B cell (primary cell): ENCODE measurements at regions of chr5 and their contacts with region 1.

Region 1: DNA sequence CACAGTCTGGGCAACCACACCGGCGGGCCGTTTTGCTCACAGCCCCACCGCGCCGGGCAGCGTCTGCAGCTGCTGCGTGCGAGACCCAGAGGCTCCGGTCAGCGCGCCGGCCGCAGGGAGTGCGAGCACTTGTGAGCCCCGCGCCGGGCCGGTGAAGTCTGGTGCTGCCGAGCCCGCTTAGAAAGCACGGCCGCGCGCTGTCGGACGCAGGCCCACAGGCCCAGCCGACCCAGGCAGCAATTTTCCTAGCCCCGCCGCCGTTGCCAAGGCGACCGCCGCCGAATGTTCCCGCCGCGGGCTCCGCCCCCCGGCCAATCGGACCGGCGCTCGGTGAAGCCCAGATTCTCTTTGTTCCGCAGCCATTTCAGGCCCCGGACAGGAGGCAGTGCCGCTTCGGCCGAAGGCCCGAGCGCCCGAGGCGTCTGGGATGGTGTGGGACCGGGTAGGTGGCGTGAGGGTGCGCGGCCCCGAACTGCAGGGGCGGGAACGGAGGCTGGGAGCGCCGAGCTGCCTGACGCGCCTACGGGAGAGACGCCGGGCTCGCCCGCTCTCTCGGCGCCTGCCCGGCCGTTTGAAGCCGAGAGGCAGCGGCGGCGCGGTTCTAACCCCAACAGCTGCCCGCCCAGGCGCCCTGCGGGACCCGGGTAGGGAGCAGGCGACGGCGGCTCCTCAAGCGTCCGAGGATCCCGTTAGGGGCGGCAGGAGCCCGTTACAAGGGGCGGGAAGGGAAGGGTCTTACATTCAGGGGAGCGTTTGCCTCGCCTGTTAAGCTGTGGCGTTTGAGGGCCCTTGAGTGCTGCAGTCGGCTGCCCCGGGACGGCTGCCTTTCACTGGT is at the start of gene TNPO1:
- DNase-seq: peak; percentile 94
- ATAC-seq: peak; percentile 79
- H3K4me3 ChIP-seq: peak within 1 kb of the TSS; percentile 81 to 89 (median 82)
- H3K4me3 Mint-ChIP-seq: peak within 1 kb of the TSS; percentile 92
- H3K27ac ChIP-seq: peak within 1 kb of the TSS; percentile 91 to 99
- H3K27ac Mint-ChIP-seq: peak within 1 kb of the TSS; percentile 94
- H3K4me1 ChIP-seq: peaks cover 17 to 20% of the 10 kb centered on the region in 2 donors
- H3K4me1 Mint-ChIP-seq: peaks cover 23% of the 10 kb centered on the region
- H3K27me3 ChIP-seq: peaks cover 0 to 7% (median 0%) of the 10 kb centered on the region in 4 experiments
- H3K27me3 Mint-ChIP-seq: peaks cover 14% of the 10 kb centered on the region
- CTCF ChIP-seq: no peak
- total RNA-seq, gene TNPO1: 102 and 107 TPM in 2 replicates

Region 2: GRCh38 chr5:71455427-71456361 is 1360.8 kb before region 1 on chr5 and contains the start of gene BDP1:
- CTCF ChIA-PET with region 1: no interaction called
- POLR2A ChIA-PET with region 1: no interaction called
- intact Hi-C with region 1: loop called (anchors 5 kb)
- DNase-seq: peak; percentile 97
- ATAC-seq: peak; percentile 86
- H3K4me3 ChIP-seq: peak within 1 kb of the TSS; percentile 71 to 99 (median 90)
- H3K4me3 Mint-ChIP-seq: peak within 1 kb of the TSS; percentile 94
- H3K27ac ChIP-seq: peak within 1 kb of the TSS; percentile 87 to 92
- H3K27ac Mint-ChIP-seq: peak within 1 kb of the TSS; percentile 97
- H3K4me1 ChIP-seq: peaks cover 17% of the 10 kb centered on the region in 2 donors
- H3K4me1 Mint-ChIP-seq: peaks cover 24% of the 10 kb centered on the region
- H3K27me3 ChIP-seq: peaks cover 0 to 7% (median 5%) of the 10 kb centered on the region in 4 experiments
- H3K27me3 Mint-ChIP-seq: peaks cover 7% of the 10 kb centered on the region
- CTCF ChIP-seq: peak; percentile 68
- total RNA-seq, gene BDP1: 59.4 and 63.9 TPM in 2 replicates

Region 3: GRCh38 chr5:72319976-72320752 is 496.4 kb before region 1 on chr5 and contains the starts of genes MRPS27 and PTCD2:
- CTCF ChIA-PET with region 1: interaction called, 3 read pairs
- POLR2A ChIA-PET with region 1: no interaction called
- intact Hi-C with region 1: loop called (anchors 1 kb)
- DNase-seq: peak; percentile 97
- ATAC-seq: peak; percentile 99
- H3K4me3 ChIP-seq: peak within 1 kb of the TSS; percentile 61 to 98 (median 81)
- H3K4me3 Mint-ChIP-seq: peak within 1 kb of the TSS; percentile 91
- H3K27ac ChIP-seq: peak within 1 kb of the TSS; percentile 47 to 60
- H3K27ac Mint-ChIP-seq: peak within 1 kb of the TSS; percentile 95
- H3K4me1 ChIP-seq: peaks cover 8 to 13% of the 10 kb centered on the region in 2 donors
- H3K4me1 Mint-ChIP-seq: peaks cover 29% of the 10 kb centered on the region
- H3K27me3 ChIP-seq: no peaks in the 10 kb centered on the region
- H3K27me3 Mint-ChIP-seq: no peaks in the 10 kb centered on the region
- CTCF ChIP-seq: no peak
- total RNA-seq, gene MRPS27: 52.8 and 58.3 TPM in 2 replicates
- total RNA-seq, gene PTCD2: 10.1 and 10.5 TPM in 2 replicates

Region 4: GRCh38 chr5:72597456-72597948 is 219.0 kb before region 1 on chr5:
- CTCF ChIA-PET with region 1: interaction called, 6 read pairs
- POLR2A ChIA-PET with region 1: no interaction called
- intact Hi-C with region 1: loop called (anchors 5 kb)
- DNase-seq: no peak
- ATAC-seq: no peak
- H3K4me3 ChIP-seq: no peak overlapping the region
- H3K4me3 Mint-ChIP-seq: no peak overlapping the region
- H3K27ac ChIP-seq: peak overlapping the region in 1 of 2 donors; percentile 92
- H3K27ac Mint-ChIP-seq: no peak overlapping the region
- H3K4me1 ChIP-seq: peaks cover 15 to 18% of the 10 kb centered on the region in 2 donors
- H3K4me1 Mint-ChIP-seq: peaks cover 18% of the 10 kb centered on the region
- H3K27me3 ChIP-seq: no peaks in the 10 kb centered on the region
- H3K27me3 Mint-ChIP-seq: peaks cover 3% of the 10 kb centered on the region
- CTCF ChIP-seq: no peak

Region 5: GRCh38 chr5:72837524-72838096 is 21.1 kb after region 1 on chr5:
- CTCF ChIA-PET with region 1: interaction called, 10 read pairs
- POLR2A ChIA-PET with region 1: interaction called, 3 read pairs
- intact Hi-C with region 1: no loop called
- DNase-seq: no peak
- ATAC-seq: no peak
- H3K4me3 ChIP-seq: no peak overlapping the region
- H3K4me3 Mint-ChIP-seq: no peak overlapping the region
- H3K27ac ChIP-seq: no peak overlapping the region
- H3K27ac Mint-ChIP-seq: no peak overlapping the region
- H3K4me1 ChIP-seq: no peaks in the 10 kb centered on the region
- H3K4me1 Mint-ChIP-seq: peaks cover 8% of the 10 kb centered on the region
- H3K27me3 ChIP-seq: no peaks in the 10 kb centered on the region
- H3K27me3 Mint-ChIP-seq: no peaks in the 10 kb centered on the region
- CTCF ChIP-seq: no peak

Region 6: DNA sequence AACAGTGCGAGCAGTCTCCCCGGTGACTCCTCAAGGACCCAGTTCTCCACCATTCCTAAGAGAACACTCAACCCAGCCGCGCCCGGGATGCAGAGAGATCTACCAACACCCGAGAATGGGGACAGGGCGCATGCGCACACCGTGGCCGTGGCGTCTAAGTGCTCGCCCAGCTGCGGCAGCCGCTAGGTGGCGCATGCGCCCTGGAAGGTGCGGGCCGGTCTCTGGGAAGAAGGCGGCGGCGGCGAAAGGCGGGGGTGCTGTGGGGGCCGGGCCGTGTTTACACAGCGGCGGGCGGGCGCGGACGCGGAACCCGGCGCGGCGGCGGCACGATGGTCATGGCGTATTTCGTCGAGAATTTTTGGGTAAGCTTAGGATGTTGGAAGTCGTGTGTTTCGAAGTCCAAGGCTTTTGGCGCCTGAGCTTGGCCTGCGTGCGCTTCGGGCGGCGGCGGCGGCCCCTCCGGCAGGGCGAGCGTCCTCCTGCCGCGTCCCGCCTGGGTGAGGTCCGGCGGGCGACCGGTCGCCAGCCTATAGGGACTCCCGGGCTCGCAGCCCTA is 139.3 kb after region 1 on chr5 and contains the start of gene FCHO2:
- CTCF ChIA-PET with region 1: no interaction called
- POLR2A ChIA-PET with region 1: no interaction called
- intact Hi-C with region 1: loop called (anchors 1 kb)
- DNase-seq: peak; percentile 96
- ATAC-seq: peak; percentile 96
- H3K4me3 ChIP-seq: peak within 1 kb of the TSS; percentile 71 to 89 (median 77)
- H3K4me3 Mint-ChIP-seq: peak within 1 kb of the TSS; percentile 98
- H3K27ac ChIP-seq: peak within 1 kb of the TSS in 1 of 2 donors; percentile 68
- H3K27ac Mint-ChIP-seq: peak within 1 kb of the TSS; percentile 94
- H3K4me1 ChIP-seq: peaks cover 11% of the 10 kb centered on the region in 2 donors
- H3K4me1 Mint-ChIP-seq: peaks cover 19% of the 10 kb centered on the region
- H3K27me3 ChIP-seq: peaks cover 0 to 28% (median 8%) of the 10 kb centered on the region in 4 experiments
- H3K27me3 Mint-ChIP-seq: peaks cover 46% of the 10 kb centered on the region
- CTCF ChIP-seq: peak; percentile 76
- total RNA-seq, gene FCHO2: 6.5 and 11.0 TPM in 2 replicates

Region 7: DNA sequence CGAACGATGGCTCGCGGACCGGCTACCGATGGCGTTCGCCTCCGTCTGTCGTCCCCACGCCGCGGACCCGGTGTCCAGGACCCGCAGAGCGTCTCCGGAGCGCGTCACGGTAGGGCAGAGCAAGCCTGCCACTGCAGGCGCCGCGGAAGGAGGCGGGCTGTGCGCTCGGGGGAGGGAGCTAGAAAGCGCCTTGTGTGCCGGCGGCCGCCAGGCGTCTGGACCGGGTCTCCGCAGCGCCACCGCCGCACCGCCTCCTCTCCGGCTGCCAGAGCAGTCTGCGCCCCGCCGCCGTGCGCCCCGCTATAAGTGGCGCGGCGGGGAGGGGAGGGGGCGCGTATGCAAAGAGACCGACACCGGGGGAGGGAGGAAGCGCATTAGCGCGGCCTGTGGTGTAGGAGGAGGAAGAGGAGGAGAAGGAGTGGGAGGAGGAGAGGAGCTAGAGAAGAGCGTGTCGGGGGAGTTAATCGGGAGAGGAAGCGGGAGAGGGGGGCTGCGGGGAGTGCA is 1824.0 kb after region 1 on chr5 and contains the start of gene ENC1:
- CTCF ChIA-PET with region 1: no interaction called
- POLR2A ChIA-PET with region 1: no interaction called
- intact Hi-C with region 1: loop called (anchors 5 kb)
- DNase-seq: peak; percentile 88
- ATAC-seq: peak; percentile 76
- H3K4me3 ChIP-seq: peak within 1 kb of the TSS; percentile 74 to 88 (median 82)
- H3K4me3 Mint-ChIP-seq: peak within 1 kb of the TSS; percentile 87
- H3K27ac ChIP-seq: peak within 1 kb of the TSS; percentile 40 to 69
- H3K27ac Mint-ChIP-seq: peak within 1 kb of the TSS; percentile 64
- H3K4me1 ChIP-seq: peaks cover 20 to 32% of the 10 kb centered on the region in 2 donors
- H3K4me1 Mint-ChIP-seq: peaks cover 21% of the 10 kb centered on the region
- H3K27me3 ChIP-seq: no peaks in the 10 kb centered on the region
- H3K27me3 Mint-ChIP-seq: no peaks in the 10 kb centered on the region
- CTCF ChIP-seq: peak; percentile 47
- total RNA-seq, gene ENC1: 14.2 and 14.6 TPM in 2 replicates